ENCODE measurements at regions of chr14 and their contacts with region 1.

Region 1: GRCh38 chr14:49691031-49691430 is 1.9 kb upstream of the KLHDC1 start:
- DNase-seq: no peak
- H3K4me3 ChIP-seq: no peak overlapping the region
- H3K27ac ChIP-seq: no peak overlapping the region
- H3K4me1 ChIP-seq: peaks cover 40% of the 10 kb centered on the region
- H3K27me3 ChIP-seq: no peaks in the 10 kb centered on the region
- CTCF ChIP-seq: no peak
- POLR2A ChIP-seq: no peak

Region 2: DNA sequence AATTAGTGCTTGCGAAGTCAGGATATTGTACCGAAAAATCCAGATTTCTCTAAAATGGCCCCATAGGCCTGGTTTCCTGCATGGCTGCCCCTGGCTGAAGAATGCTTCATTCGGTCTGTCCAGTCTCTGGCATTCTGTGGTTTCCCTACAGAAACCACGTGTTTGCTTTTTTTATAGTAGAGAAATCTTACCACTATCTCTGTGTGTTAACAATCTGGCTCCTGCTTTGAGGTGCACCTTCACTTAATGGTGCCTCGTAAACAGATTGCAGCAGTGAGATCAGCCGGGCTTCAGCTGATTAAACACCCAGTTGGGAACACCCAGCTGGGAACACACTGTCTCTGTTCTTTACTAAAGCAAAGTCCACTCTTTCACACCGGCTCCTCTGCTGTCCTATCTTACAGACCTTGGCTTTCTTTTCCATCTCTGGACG is 49.3 kb before region 1 on chr14:
- intact Hi-C with region 1: loop called (anchors 2 kb)
- DNase-seq: no peak
- H3K4me3 ChIP-seq: no peak overlapping the region
- H3K27ac ChIP-seq: no peak overlapping the region
- H3K4me1 ChIP-seq: peaks cover 40% of the 10 kb centered on the region
- H3K27me3 ChIP-seq: no peaks in the 10 kb centered on the region
- CTCF ChIP-seq: no peak
- POLR2A ChIP-seq: no peak

Region 3: GRCh38 chr14:50303744-50304471 is 612.9 kb after region 1 on chr14:
- intact Hi-C with region 1: no loop called
- DNase-seq: no peak
- H3K4me3 ChIP-seq: no peak overlapping the region
- H3K27ac ChIP-seq: no peak overlapping the region
- H3K4me1 ChIP-seq: no peaks in the 10 kb centered on the region
- H3K27me3 ChIP-seq: no peaks in the 10 kb centered on the region
- CTCF ChIP-seq: no peak
- POLR2A ChIP-seq: no peak